Heart right ventricle (tissue), 16 donors: ENCODE measurements at regions of chr1 and their contacts with region 1.

Region 1: GRCh38 chr1:183164350-183164749 is 21.7 kb upstream of the LAMC2 start:
- DNase-seq: no peak
- ATAC-seq: no peak
- H3K4me3 ChIP-seq: no peak overlapping the region
- H3K27ac ChIP-seq: no peak overlapping the region
- H3K4me1 ChIP-seq: no peaks in the 10 kb centered on the region
- H3K27me3 ChIP-seq: no peaks in the 10 kb centered on the region
- CTCF ChIP-seq: no peak

Region 2: DNA sequence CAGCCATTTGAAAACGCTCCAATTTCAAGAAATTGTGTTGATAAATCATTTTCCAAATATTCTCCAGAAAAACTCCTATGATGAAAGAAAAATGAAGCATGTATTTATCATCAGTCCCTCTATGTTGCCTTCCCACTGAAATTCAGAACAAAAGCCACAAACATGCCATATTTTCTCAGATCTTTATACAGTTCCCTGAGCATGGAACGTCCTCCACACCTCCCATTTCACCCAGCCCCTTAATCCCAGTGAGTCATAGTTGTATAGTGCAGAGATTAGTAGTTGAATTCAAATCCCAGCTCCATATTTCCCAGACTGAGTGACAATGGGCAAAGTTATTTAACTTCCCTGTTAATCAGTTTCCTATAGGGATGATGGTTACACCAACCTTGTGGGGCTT is 395.4 kb before region 1 on chr1:
- intact Hi-C with region 1: no loop called
- DNase-seq: peak in 1 of 2 donors; percentile 25
- ATAC-seq: peak in 3 of 8 donors; percentile 40 to 57 (median 52)
- H3K4me3 ChIP-seq: no peak overlapping the region
- H3K27ac ChIP-seq: no peak overlapping the region
- H3K4me1 ChIP-seq: peaks cover 0 to 33% (median 8%) of the 10 kb centered on the region in 9 donors
- H3K27me3 ChIP-seq: no peaks in the 10 kb centered on the region
- CTCF ChIP-seq: no peak

Region 3: DNA sequence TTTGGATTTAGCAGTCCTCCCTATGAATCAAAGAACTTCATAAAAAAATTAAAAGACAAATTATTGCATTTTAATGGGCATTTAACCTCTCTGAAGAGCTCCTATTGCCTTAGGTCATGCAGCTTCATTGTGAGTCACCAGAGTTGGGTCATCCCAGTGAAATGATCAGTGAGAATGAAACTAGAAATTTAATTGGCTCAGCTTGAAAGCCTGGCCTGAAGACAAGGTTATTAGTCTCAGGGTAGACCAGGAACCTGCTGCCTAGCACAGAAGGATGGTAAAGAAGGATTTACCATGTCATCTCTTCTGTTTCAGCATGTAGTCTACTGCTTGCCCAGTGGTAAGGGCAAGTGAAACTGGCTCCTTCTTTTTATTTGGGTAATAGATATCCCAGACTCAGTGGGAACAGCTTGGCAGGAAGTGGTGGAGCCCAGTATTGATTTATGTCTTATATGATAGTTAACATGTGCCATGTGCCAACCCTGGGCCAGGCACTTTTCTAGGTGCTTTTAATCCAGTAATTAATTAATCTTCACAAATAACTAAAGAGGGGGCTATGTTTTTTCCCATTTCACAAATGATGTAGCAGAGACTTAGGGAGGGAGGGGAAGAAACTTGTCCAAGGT is 45.3 kb after region 1 on chr1:
- intact Hi-C with region 1: loop called in 1 of 10 experiments (anchors 1 kb)
- DNase-seq: no peak
- ATAC-seq: peak in 3 of 8 donors; percentile 40 to 71 (median 58)
- H3K4me3 ChIP-seq: no peak overlapping the region
- H3K27ac ChIP-seq: no peak overlapping the region
- H3K4me1 ChIP-seq: peaks cover 0 to 10% (median 0%) of the 10 kb centered on the region in 9 donors
- H3K27me3 ChIP-seq: no peaks in the 10 kb centered on the region
- CTCF ChIP-seq: no peak